ENCODE measurements at regions of chr14 and their contacts with region 1.

Region 1: GRCh38 chr14:22973217-22974032 is 8.9 kb downstream of the AJUBA start:
- DNase-seq: peak; percentile 63 to 79
- ATAC-seq: peak; percentile 24 to 45
- H3K4me3 ChIP-seq: no peak overlapping the region
- H3K27ac ChIP-seq: peak overlapping the region; percentile 98 to 100
- H3K4me1 ChIP-seq: peaks cover 63% of the 10 kb centered on the region
- CTCF ChIP-seq: peak; percentile 83
- EP300 ChIP-seq: no peak
- POLR2A ChIP-seq: no peak
- RAD21 ChIP-seq: peak; percentile 86 to 87

Region 2: DNA sequence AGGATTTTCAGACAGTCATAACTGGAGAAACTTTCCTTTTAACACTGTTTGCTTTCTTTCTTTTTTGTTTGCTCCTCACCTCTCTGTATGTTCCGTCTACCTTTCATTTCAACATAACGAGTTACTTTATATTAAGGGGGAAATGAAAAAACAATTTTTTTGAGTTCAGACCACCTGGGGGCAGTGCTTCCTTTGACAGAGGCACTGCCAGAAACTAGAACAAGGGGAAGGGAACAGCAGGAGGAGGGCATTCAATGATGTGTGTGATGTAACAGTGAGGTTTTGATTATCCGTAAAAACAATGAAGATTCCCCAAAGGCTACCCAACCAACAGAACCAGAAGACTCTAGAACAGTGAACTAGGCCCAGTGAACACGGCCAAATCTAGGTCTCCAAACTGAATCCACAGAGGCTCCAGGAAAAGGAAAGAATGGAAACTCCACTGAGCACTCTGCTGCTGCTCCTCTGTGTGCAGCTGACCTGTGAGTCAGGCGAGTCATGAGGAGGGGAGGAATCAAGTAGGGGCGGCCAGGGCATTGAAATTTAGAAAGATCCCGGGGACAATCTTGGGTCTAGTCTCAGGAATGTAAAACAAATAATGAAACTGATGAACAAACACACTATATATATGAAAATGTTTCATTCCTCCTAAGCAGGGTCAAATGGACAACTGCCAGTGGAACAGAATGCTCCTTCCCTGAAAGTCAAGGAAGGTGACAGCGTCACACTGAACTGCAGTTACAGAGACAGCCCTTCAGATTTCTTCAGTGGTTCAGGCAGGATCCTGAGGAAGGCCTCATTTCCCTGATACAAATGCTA is 707.9 kb before region 1 on chr14:
- CTCF ChIA-PET with region 1: no interaction called
- POLR2A ChIA-PET with region 1: interaction called, 11 read pairs
- DNase-seq: no peak
- ATAC-seq: peak in 1 of 2 experiments; percentile 70; a peak in 2 of 6 replicates
- H3K4me3 ChIP-seq: no peak overlapping the region
- H3K27ac ChIP-seq: no peak overlapping the region
- H3K4me1 ChIP-seq: no peaks in the 10 kb centered on the region
- CTCF ChIP-seq: no peak
- EP300 ChIP-seq: no peak
- POLR2A ChIP-seq: no peak
- RAD21 ChIP-seq: peak in 1 of 2 experiments; percentile 27; a peak in 2 of 5 replicates

Region 3: DNA sequence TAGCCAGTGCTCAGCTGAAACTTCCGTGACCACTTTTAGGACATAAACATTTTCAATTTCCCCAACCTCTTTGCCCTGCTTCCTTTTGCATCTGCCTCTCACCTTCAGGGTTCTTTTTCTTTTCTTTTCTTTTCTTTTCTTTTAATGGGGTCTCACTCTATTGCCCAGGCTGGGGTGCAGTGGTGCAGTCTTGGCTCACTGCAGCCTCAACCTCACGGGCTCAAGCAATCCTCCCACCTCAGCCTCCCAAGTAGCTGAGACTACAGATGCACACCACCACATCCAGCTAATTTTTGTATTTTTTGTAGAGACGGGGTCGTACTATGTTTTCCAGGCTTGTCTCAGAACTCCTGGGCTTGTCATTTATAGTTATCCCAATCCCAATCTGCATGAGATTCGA is 106.6 kb before region 1 on chr14:
- CTCF ChIA-PET with region 1: no interaction called
- POLR2A ChIA-PET with region 1: no interaction called
- DNase-seq: no peak
- ATAC-seq: no peak
- H3K4me3 ChIP-seq: no peak overlapping the region
- H3K27ac ChIP-seq: no peak overlapping the region
- H3K4me1 ChIP-seq: peaks cover 14% of the 10 kb centered on the region
- CTCF ChIP-seq: no peak
- EP300 ChIP-seq: no peak
- POLR2A ChIP-seq: no peak
- RAD21 ChIP-seq: no peak

Region 4: DNA sequence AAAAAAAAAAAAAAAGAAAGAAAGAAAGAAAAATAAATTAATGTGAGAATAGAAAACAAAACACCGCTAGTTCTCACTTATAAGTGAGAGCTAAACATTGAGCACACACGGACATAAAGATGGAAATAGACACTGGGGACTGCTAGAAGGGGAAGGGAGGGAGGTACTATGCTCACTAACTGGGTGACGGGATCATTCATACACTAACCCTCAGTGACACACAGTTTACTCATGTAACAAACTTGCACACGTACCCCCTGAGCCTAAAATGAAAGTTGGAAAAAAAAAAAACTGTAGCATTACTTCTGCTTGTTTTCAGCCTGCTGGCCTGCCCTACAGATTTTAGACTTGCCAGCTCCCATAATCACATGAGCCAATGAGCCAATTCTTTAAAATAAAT is 33.7 kb before region 1 on chr14:
- CTCF ChIA-PET with region 1: interaction called, 15 read pairs
- POLR2A ChIA-PET with region 1: interaction called, 3 read pairs
- DNase-seq: no peak
- ATAC-seq: no peak
- H3K4me3 ChIP-seq: no peak overlapping the region
- H3K27ac ChIP-seq: no peak overlapping the region
- H3K4me1 ChIP-seq: no peaks in the 10 kb centered on the region
- CTCF ChIP-seq: no peak
- EP300 ChIP-seq: no peak
- POLR2A ChIP-seq: no peak
- RAD21 ChIP-seq: no peak

Region 5: DNA sequence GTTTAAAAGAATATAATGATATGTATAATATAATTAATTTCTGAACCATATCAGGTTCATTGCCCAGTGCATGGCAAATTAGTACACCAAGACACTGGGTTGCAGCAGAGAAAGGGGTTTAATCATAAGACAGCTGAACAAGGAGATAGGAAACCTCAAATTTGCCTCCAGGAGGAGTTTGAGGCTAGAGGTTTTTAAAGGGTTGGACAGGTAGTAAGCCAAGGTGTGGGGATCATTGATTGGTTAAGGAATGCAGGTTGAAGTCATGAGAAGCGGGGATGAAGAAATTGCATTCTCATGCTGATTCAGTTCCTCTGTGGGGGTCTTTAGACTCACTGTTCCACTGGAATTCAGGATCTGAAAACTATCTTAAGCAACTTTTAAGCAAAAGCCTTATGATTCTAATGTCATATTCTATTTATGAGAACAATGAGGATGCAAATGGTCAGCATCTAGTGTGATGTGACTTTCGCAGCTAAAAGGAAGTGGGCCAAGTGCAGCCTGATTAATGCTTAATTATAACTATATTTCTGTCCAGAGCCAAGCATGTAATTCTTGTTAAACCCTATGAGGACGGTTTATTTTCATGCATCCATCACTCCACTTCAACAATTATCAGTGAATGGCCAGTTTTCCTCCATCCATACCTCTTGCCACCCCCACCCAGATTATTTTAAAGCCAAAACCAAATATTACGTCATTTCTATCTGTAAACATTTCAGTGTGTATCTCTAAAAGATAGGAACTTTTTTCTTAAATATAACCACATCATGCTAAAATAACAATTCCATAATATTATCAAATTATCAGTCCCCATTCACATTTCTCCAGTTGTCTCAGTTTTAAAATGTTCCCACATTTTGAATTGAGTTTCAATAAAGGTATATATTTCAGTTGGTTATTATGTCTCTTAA is 279.3 kb after region 1 on chr14:
- CTCF ChIA-PET with region 1: no interaction called
- POLR2A ChIA-PET with region 1: no interaction called
- DNase-seq: no peak
- ATAC-seq: no peak
- H3K4me3 ChIP-seq: no peak overlapping the region
- H3K27ac ChIP-seq: no peak overlapping the region
- H3K4me1 ChIP-seq: no peaks in the 10 kb centered on the region
- CTCF ChIP-seq: no peak
- EP300 ChIP-seq: no peak
- POLR2A ChIP-seq: no peak
- RAD21 ChIP-seq: no peak

Measured in A549 (cell line).